ENCODE measurements at regions of chr1 and their contacts with region 1.

Region 1: DNA sequence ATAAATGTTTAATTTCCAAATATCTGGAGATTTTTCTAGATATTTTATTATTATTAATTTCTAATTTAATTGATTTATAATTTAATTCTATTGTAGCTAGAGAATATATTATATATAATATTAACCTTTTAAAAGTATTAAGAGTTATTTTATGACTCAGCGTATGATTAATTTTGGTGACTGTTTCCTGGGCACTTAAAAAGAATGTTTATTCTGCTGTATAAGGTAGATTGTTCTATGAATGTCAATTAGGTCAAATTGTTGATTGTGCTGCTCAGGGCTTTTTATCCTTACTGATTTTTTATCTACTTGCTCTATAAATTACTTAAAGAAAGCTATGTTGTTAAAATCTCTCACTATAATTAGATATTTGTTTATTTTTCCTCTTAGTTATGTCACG is 20.1 kb upstream of the GJA8 start:
- ATAC-seq: no peak
- H3K4me3 ChIP-seq: no peak overlapping the region
- H3K27ac ChIP-seq: no peak overlapping the region
- H3K4me1 ChIP-seq: no peaks in the 10 kb centered on the region

Region 2: DNA sequence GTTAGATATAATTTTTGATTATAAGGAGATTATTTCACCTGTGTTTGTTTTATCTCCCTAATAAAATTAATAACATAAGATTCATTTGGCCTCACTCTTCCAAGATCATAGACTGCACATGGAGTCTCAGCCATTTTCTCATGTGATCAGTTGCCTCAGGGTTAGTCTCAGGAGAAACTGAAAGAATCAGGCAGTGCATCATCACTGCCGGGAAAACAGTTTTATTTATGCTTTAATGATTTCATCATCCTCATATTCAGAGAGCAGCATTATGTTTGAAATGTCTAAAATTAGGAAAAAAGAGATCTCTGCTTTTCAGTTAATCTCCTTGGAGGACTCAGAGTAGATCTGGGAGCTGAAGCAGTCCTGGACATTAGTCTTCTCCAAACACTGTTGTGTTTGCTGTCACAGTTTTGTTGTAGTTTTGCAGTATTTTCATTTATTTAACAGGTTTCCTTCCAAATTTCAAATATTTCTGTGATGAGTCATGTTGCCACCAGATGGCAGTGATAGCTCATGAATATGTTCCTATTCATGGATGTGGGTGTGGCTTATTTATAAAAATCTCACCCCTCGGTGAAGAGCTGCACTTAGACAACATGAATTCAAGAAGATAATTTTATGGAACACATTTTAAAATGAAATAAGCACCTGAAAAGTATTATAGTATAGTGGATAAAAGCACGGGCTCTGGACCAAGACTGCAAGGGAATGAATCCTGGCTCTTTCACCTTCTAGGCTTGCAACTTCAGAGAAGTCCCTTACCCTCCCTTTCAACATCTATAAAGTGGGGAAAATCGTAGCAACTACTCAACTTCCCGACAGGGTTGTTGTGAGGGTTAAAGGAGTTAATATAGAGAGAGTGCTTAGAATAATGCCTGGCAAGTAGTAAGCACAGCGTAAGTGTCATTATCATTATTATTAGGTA is 608.9 kb before region 1 on chr1:
- in situ Hi-C with region 1: loop called in 3 of 9 experiments (anchors 10 to 25 kb)
- ATAC-seq: peak; percentile 67 to 90 (median 84)
- H3K4me3 ChIP-seq: no peak overlapping the region
- H3K27ac ChIP-seq: no peak overlapping the region
- H3K4me1 ChIP-seq: peaks cover 0 to 2% of the 10 kb centered on the region in 2 donors

Region 3: GRCh38 chr1:147494998-147495580 is 387.4 kb before region 1 on chr1:
- in situ Hi-C with region 1: loop called in 6 of 9 experiments (anchors 10 to 25 kb)
- ATAC-seq: peak; percentile 97 to 100 (median 99)
- H3K4me3 ChIP-seq: no peak overlapping the region
- H3K27ac ChIP-seq: no peak overlapping the region
- H3K4me1 ChIP-seq: no peaks in the 10 kb centered on the region

Region 4: DNA sequence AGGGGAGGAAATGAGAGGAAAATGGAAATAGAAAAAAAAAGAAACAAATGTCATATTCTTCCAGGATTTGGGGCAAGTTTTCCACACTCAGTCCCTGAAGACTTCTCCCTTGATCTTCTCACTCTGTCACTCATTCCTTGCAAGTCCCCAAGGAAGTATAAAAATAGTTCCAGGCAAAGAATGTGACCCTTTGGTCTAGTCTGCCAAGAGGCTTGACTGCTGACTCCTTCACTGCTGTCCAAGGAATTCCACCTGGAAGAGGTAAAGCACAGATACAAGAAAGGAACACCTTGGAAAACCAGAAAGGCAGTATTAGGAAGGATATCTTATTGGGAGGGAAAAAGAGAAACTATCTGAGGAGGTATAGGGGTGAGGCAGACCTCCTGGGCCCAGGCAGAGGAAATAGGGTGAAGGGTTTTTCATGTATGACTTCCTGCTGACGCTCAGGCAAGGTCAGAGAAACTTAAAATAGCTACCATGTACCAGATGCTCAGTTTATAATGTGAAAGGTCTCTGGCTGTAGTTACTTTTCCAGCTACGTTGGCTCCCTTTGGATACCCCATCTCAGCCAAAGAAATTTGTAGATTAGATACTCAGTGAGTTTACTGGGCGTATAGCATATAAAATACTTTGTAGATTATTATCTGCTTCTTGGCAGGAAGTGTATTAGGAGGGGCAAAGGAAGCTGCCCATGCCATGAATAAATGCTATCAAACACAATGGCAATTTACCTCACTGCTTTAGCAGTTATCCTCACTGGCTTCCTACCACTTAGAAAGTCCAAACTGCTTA is 120.1 kb before region 1 on chr1:
- in situ Hi-C with region 1: loop called in 1 of 9 experiments (anchors 10 kb)
- ATAC-seq: peak in 3 of 8 experiments; percentile 29 to 74 (median 33)
- H3K4me3 ChIP-seq: no peak overlapping the region
- H3K27ac ChIP-seq: no peak overlapping the region
- H3K4me1 ChIP-seq: peaks cover 0 to 11% of the 10 kb centered on the region in 2 donors